ENCODE measurements at regions of chr22 and their contacts with region 1.

Region 1: DNA sequence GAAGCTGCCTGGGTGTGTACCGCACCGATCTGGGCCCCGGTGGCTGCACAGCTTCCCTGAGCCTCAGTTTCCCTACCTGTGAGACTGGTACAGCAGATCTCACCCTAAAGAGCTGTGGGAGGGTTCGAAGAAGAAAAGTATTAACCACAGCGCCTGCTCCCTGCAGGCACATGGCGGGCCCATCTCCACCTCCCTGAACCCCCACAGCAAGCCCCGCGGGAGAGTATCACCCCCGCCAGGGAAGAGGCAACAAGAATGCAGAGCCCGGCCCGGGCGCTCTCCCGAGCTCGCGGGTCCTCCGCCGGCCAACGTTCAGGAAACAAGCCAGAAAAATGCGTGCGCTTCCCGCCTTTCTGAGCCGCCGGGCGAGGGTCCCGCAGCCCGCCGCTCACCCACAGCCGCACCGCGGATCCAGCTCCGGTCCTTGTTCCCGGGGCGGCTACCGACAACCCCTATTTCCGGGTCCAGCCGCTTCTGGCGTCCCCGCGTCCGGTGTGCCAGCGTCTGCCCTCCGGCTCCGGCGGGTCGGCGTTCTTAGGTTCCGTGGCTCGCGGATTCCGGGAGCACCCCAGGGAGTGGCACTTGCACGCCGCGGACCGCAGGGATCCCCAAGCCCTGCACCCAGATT is at the start of gene TOP3B:
- DNase-seq: peak; percentile 85
- ATAC-seq: peak; percentile 97
- H3K4me3 Mint-ChIP-seq: peak within 1 kb of the TSS; percentile 91
- H3K27ac Mint-ChIP-seq: peak within 1 kb of the TSS; percentile 87
- H3K4me1 Mint-ChIP-seq: peaks cover 28% of the 10 kb centered on the region
- H3K27me3 Mint-ChIP-seq: no peaks in the 10 kb centered on the region
- total RNA-seq, gene TOP3B: 47.3 to 49.9 TPM

Region 2: GRCh38 chr22:21938071-21938822 is 44.2 kb before region 1 on chr22:
- CTCF ChIA-PET with region 1: interaction called, 10 read pairs
- POLR2A ChIA-PET with region 1: no interaction called
- DNase-seq: peak; percentile 93
- ATAC-seq: peak; percentile 99
- H3K4me3 Mint-ChIP-seq: peak overlapping the region; percentile 73
- H3K27ac Mint-ChIP-seq: peak overlapping the region; percentile 84
- H3K4me1 Mint-ChIP-seq: peaks cover 59% of the 10 kb centered on the region
- H3K27me3 Mint-ChIP-seq: no peaks in the 10 kb centered on the region

Region 3: GRCh38 chr22:21972293-21972779 is 10.1 kb before region 1 on chr22:
- CTCF ChIA-PET with region 1: interaction called, 39 read pairs
- POLR2A ChIA-PET with region 1: interaction called, 7 read pairs
- DNase-seq: peak; percentile 68
- ATAC-seq: peak; percentile 80
- H3K4me3 Mint-ChIP-seq: no peak overlapping the region
- H3K27ac Mint-ChIP-seq: no peak overlapping the region
- H3K4me1 Mint-ChIP-seq: no peaks in the 10 kb centered on the region
- H3K27me3 Mint-ChIP-seq: no peaks in the 10 kb centered on the region

Region 4: DNA sequence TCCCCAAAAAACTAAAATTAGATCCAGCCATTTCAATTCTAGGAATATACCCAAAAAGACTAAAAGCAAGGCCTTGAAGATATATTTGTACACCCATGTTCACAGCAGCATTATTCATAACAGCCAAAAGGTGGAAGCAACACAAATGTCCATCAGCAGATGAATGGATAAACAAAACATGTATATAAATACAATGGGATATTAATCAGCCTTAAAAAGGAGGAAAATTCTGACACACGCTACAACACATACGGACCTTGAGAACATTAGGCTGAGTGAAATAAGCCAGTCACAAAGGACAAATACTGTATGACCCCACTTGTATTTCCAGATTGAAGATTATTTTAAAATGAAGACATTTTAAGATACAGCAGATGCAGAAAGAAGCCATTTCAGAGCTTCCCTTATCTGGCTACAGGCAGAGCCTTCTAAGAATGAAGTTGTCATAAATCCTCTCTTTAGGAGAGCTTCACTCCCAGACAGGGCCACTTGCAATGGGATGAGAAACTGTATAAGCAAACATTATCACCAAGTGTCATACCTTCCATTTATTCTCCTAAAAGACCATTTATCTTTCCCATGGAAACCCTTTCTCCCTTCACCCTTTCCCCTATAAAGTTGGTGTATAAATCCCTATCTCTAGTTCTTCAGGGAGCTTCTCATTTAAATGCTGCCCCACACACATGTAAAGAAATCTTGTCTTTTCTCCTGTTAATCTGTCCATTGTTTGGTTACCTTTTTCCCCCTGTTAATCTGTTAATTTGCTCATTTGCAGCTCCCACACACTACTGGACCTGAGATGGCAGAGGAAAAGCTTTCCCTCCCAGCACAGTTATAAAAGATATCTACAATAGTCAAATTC is 19.4 kb after region 1 on chr22:
- CTCF ChIA-PET with region 1: no interaction called
- POLR2A ChIA-PET with region 1: no interaction called
- DNase-seq: no peak
- ATAC-seq: no peak
- H3K4me3 Mint-ChIP-seq: no peak overlapping the region
- H3K27ac Mint-ChIP-seq: no peak overlapping the region
- H3K4me1 Mint-ChIP-seq: no peaks in the 10 kb centered on the region
- H3K27me3 Mint-ChIP-seq: peaks cover 18% of the 10 kb centered on the region

Region 5: GRCh38 chr22:22043296-22044078 is 61.0 kb after region 1 on chr22:
- CTCF ChIA-PET with region 1: no interaction called
- POLR2A ChIA-PET with region 1: no interaction called
- DNase-seq: no peak
- ATAC-seq: no peak
- H3K4me3 Mint-ChIP-seq: no peak overlapping the region
- H3K27ac Mint-ChIP-seq: no peak overlapping the region
- H3K4me1 Mint-ChIP-seq: no peaks in the 10 kb centered on the region
- H3K27me3 Mint-ChIP-seq: peaks cover 21% of the 10 kb centered on the region

Measured in activated CD8-positive, alpha-beta T cell treated with anti-CD3 and anti-CD28 coated beads, Interleukin-2, amount 10 ng/mL, durations not matched to agents 7 days and 5 days (primary cell).